ENCODE measurements at regions of chr11 and their contacts with region 1.

Region 1: DNA sequence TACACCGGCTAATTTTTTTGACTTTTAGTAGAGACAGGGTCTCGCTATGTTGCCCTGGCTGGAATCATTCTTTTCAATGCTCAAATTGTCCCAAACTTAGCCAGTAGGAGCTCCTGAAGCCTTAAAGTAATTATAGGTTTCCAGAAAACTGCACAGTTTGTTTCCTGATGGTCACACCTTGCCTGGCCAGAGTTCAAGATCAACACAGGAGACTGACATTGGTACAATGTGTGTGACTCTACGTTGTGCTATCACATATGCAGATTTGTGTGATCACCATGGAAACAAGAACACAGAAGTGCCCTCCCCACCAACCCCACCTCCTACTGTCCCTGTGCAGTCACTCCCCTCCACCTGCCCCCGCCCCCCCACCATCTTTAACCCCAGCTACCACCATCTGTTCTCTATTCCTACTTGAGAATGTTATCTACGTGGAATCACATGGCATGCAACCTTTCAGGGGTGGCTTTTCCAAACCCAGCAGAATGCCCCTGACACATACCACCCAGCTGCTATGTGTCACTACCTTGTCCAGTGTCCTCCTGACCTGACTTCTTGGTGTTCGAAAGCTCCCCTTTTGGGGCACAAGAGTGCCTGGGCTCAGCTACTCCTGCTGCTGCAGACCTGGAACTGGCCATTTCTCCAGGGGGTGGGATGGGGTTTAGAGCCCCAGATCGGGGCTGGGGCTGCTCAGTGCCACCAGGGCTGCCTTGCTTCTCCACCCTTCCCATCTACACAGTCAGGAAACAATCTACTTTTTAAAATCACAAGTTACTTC is 6.1 kb upstream of the NAP1L4 start:
- DNase-seq: no peak
- ATAC-seq: no peak
- H3K4me3 ChIP-seq: no peak overlapping the region
- H3K4me3 Mint-ChIP-seq: no peak overlapping the region
- H3K27ac ChIP-seq: no peak overlapping the region
- H3K27ac Mint-ChIP-seq: no peak overlapping the region
- H3K4me1 ChIP-seq: no peaks in the 10 kb centered on the region
- H3K4me1 Mint-ChIP-seq: no peaks in the 10 kb centered on the region
- H3K27me3 ChIP-seq: no peaks in the 10 kb centered on the region
- H3K27me3 Mint-ChIP-seq: no peaks in the 10 kb centered on the region
- CTCF ChIP-seq: no peak

Region 2: DNA sequence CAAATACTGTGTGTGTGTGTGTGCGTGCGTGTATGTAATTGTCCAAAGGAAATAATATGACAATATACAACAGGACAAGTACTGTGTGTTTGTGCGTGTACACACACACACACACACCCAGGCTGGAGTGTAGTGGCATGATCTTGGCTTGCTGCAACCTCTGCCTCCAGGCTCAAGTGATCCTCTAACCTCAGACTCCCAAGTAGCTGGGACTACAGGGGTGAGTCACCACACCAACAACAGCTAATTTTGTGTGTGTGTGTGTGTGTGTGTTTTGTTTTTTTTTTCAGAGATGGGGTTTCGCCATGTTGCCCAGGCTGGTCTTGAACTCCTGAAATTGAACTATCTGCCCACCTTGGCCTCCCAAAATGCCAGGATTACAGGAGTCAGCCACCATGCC is 737.6 kb after region 1 on chr11:
- CTCF ChIA-PET with region 1: no interaction called
- POLR2A ChIA-PET with region 1: no interaction called
- intact Hi-C with region 1: loop called in 1 of 2 experiments (anchors 5 kb)
- DNase-seq: no peak
- ATAC-seq: no peak
- H3K4me3 ChIP-seq: no peak overlapping the region
- H3K4me3 Mint-ChIP-seq: no peak overlapping the region
- H3K27ac ChIP-seq: no peak overlapping the region
- H3K27ac Mint-ChIP-seq: no peak overlapping the region
- H3K4me1 ChIP-seq: no peaks in the 10 kb centered on the region
- H3K4me1 Mint-ChIP-seq: peaks cover 12% of the 10 kb centered on the region
- H3K27me3 ChIP-seq: no peaks in the 10 kb centered on the region
- H3K27me3 Mint-ChIP-seq: no peaks in the 10 kb centered on the region
- CTCF ChIP-seq: no peak